ENCODE measurements at regions of chr19 and their contacts with region 1.

Region 1: GRCh38 chr19:47514869-47515588 is at the start of gene NAPA:
- DNase-seq: peak; percentile 100
- H3K4me3 ChIP-seq: peak within 1 kb of the TSS; percentile 98
- H3K4me3 Mint-ChIP-seq: peak within 1 kb of the TSS; percentile 92 to 99 (median 98)
- H3K27ac ChIP-seq: peak within 1 kb of the TSS; percentile 98
- H3K27ac Mint-ChIP-seq: peak within 1 kb of the TSS; percentile 93 to 99 (median 98)
- H3K4me1 ChIP-seq: peaks cover 71% of the 10 kb centered on the region
- H3K4me1 Mint-ChIP-seq: peaks cover 77 to 96% (median 88%) of the 10 kb centered on the region in 3 donors
- H3K27me3 ChIP-seq: no peaks in the 10 kb centered on the region
- H3K27me3 Mint-ChIP-seq: peaks cover 0 to 7% of the 10 kb centered on the region in 2 donors
- total RNA-seq, gene NAPA: 77.6 to 78.0 TPM

Region 2: GRCh38 chr19:47436712-47437401 is 78.2 kb before region 1 on chr19:
- CTCF ChIA-PET with region 1: interaction called, 15 read pairs
- POLR2A ChIA-PET with region 1: no interaction called
- DNase-seq: peak; percentile 68 to 86 (median 78)
- H3K4me3 ChIP-seq: no peak overlapping the region
- H3K4me3 Mint-ChIP-seq: peak overlapping the region in 4 of 7 donors; percentile 0 to 76 (median 25)
- H3K27ac ChIP-seq: no peak overlapping the region
- H3K27ac Mint-ChIP-seq: peak overlapping the region in 1 of 8 donors; percentile 65
- H3K4me1 ChIP-seq: peaks cover 5% of the 10 kb centered on the region
- H3K4me1 Mint-ChIP-seq: peaks cover 15 to 23% (median 20%) of the 10 kb centered on the region in 3 donors
- H3K27me3 ChIP-seq: peaks cover 13% of the 10 kb centered on the region
- H3K27me3 Mint-ChIP-seq: peaks cover 42 to 73% of the 10 kb centered on the region in 2 donors

Region 3: DNA sequence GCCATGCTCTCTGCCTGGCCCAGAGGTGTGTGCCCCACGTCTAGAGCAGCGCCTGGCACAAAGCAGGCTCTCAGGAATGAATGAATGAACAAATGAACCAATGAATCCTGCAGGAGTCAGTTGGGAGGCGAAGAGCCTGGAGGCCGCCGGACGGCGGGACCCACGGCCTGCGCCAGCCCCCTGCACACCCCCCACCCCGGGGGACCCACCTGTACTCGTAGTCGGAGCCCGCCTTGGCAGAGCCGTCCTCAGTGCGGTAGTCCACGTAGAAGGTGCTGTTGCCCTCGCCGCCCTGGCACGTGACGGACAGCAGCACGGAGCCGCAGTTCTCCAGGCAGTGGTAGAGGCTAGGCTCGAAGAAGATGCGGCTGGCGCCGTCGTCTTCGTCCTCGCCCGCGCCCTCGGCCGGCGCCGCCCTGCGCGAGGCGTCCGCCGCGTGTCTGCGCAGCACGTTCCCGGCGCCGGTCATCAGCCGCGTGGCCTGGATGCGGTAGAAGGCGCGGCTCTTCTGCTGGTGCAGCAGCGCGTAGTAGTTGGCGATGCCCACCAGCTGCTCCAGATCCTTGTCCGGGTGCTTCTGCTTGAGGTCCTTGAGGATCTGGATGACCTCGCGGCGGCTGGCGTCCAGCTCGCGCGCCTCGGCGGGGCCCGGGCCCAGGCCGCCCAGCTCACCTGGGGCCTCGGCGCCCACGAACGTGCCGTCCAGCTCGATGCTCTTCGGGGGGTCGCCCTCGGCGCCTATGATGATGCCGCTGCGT is 58.1 kb before region 1 on chr19:
- CTCF ChIA-PET with region 1: no interaction called
- POLR2A ChIA-PET with region 1: no interaction called
- DNase-seq: no peak
- H3K4me3 ChIP-seq: no peak overlapping the region
- H3K4me3 Mint-ChIP-seq: no peak overlapping the region
- H3K27ac ChIP-seq: no peak overlapping the region
- H3K27ac Mint-ChIP-seq: peak overlapping the region in 1 of 8 donors; percentile 22
- H3K4me1 ChIP-seq: no peaks in the 10 kb centered on the region
- H3K4me1 Mint-ChIP-seq: no peaks in the 10 kb centered on the region
- H3K27me3 ChIP-seq: peaks cover 31% of the 10 kb centered on the region
- H3K27me3 Mint-ChIP-seq: peaks cover 24 to 36% of the 10 kb centered on the region in 2 donors

Region 4: DNA sequence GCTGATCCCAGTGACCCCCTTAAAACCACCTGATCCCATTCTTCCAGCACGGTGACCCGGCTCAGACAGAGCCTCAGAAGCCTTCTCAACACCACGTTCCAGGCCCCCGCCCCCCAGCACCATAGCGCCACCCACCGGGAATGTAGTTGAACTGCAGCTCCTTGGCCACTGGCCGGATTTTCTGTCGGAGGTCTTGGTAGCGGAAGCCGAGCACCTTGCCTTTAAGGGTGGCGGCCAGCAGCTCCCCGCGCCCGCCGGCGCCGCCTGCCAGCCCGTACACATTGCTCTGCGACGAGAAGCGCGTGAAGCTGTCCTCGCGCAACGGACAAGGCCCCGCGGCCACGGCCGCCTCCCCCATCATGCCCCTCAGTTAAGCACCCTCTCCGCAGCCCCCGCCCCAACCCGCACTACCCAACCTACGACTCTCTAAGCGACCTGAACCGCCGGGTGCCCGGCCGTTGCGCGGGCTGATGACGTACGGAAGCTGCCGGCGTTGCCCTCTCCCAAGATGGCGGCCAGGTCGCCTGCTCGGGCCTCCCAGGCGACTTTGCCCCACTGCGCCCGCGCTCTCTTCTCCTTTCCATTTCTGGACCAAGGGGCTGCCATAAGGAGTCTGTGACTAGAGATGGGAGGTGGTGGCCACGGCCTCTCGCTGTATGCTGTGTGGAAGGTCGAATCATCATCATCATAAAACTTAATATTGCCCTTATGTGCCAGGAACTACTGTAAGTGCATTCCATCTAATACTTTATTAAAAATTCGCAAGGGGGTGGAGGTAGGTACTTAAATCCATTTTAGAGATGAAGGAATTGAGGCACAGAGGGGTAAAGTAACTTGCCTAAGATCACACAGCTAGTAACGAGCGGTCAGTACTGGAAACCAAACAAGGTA is 31.0 kb before region 1 on chr19 and contains the start of gene KPTN:
- CTCF ChIA-PET with region 1: interaction called, 25 read pairs
- POLR2A ChIA-PET with region 1: interaction called, 5 read pairs
- DNase-seq: peak; percentile 78 to 90 (median 86)
- H3K4me3 ChIP-seq: peak within 1 kb of the TSS; percentile 79
- H3K4me3 Mint-ChIP-seq: peak within 1 kb of the TSS; percentile 92 to 99 (median 98)
- H3K27ac ChIP-seq: peak within 1 kb of the TSS; percentile 90
- H3K27ac Mint-ChIP-seq: peak within 1 kb of the TSS; percentile 96 to 100 (median 98)
- H3K4me1 ChIP-seq: peaks cover 21% of the 10 kb centered on the region
- H3K4me1 Mint-ChIP-seq: peaks cover 25 to 46% (median 40%) of the 10 kb centered on the region in 3 donors
- H3K27me3 ChIP-seq: no peaks in the 10 kb centered on the region
- H3K27me3 Mint-ChIP-seq: peaks cover 0 to 6% of the 10 kb centered on the region in 2 donors
- total RNA-seq, gene KPTN: 10.8 to 12.4 TPM

Region 5: GRCh38 chr19:47503130-47503825 is 11.8 kb before region 1 on chr19:
- CTCF ChIA-PET with region 1: interaction called, 11 read pairs
- POLR2A ChIA-PET with region 1: no interaction called
- DNase-seq: no peak
- H3K4me3 ChIP-seq: no peak overlapping the region
- H3K4me3 Mint-ChIP-seq: no peak overlapping the region
- H3K27ac ChIP-seq: no peak overlapping the region
- H3K27ac Mint-ChIP-seq: peak overlapping the region in 1 of 8 donors; percentile 42
- H3K4me1 ChIP-seq: no peaks in the 10 kb centered on the region
- H3K4me1 Mint-ChIP-seq: peaks cover 8 to 16% (median 15%) of the 10 kb centered on the region in 3 donors
- H3K27me3 ChIP-seq: no peaks in the 10 kb centered on the region
- H3K27me3 Mint-ChIP-seq: peaks cover 0 to 1% of the 10 kb centered on the region in 2 donors

Region 6: DNA sequence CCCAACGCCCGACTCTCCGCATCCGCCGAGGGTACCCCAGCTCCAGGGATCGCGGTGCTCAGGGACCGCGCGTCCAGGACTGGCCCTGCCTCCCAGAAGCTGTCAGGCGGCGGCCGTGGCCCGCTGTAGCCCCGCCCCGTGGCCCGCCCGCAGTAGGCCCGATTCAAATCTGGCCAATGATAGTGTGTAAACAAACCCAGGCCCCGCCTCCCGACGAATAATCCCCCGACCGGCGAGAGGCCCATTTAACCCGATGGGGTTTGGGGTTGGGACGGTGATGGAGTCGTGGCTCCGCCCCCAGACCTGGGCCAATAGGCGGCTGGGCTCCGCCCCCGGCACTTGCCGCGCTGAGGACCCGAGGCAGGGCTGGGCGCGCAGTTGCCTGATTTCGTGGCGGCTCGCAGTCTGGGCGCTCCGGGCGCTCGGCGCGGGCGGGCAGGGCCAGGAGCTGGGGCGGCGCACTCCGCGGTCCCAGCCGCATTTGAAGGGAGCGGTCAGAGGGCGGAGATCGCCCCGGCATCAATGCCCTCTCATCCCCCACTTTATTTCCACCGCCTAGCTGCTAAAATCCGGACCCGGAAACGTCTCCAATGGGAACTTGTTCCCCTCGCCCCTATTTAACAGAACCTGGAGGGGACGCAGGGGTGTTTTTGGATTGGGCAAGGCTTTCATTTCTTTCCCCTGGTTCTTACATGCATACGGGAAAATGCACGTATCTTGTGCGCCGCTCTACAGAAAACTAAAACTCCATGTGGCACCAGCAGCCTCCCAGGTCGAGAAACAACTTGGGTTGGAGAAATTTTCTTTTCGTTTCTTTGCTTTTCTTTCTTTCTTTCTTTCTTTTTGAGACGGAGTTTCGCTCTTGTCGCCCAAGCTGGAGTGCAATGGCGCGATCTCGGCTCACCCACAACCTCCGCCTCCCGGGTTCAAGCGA is 85.5 kb after region 1 on chr19:
- CTCF ChIA-PET with region 1: interaction called, 24 read pairs
- POLR2A ChIA-PET with region 1: interaction called, 6 read pairs
- DNase-seq: peak; percentile 97 to 100 (median 99)
- H3K4me3 ChIP-seq: peak overlapping the region; percentile 90
- H3K4me3 Mint-ChIP-seq: peak overlapping the region; percentile 83 to 92 (median 85)
- H3K27ac ChIP-seq: peak overlapping the region; percentile 60
- H3K27ac Mint-ChIP-seq: peak overlapping the region; percentile 66 to 96 (median 86)
- H3K4me1 ChIP-seq: peaks cover 8% of the 10 kb centered on the region
- H3K4me1 Mint-ChIP-seq: peaks cover 15 to 21% (median 19%) of the 10 kb centered on the region in 3 donors
- H3K27me3 ChIP-seq: no peaks in the 10 kb centered on the region
- H3K27me3 Mint-ChIP-seq: peaks cover 0 to 3% of the 10 kb centered on the region in 2 donors

Region 7: DNA sequence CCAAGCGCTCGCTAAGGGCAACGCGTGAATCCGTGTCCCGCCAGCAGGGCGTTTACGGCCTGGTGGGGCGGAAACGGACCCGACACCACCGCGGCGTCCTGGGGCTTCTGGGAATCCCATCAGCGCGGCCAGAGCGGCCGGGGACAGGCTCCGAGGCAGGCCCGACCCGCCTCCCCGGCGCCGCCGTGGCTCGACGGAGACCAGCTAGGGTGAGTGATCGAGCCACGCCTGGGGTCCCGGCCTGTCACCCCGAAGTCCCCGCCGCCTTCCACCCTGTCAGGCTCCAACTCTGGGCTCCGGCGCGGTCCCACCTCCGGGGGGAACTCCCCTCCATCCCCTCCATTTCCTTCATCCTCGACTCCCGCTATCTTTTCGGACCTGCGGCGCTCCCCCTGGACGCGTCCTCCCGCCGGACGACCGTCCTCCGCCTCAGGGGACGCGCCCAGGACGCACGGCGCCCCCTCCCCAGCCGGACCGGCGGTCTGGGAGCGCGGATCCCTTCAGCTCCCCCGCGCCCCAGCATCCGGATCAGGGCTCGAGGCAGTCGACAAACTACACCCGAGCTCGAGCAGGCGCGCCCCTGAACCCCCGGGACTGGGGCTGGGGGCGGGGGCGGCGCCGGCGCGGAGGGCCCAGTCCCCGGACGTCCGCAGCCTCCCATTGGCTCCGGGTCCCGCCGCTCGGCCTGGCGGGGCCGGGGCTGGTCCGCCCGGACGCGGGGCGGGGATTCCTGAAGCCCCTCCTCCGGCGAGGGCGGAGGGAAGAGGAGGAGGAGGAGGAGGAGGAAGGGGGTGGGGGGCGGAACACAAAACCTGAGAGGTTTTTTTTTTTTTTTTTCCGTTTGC is 93.3 kb after region 1 on chr19:
- CTCF ChIA-PET with region 1: interaction called, 15 read pairs
- POLR2A ChIA-PET with region 1: interaction called, 10 read pairs
- DNase-seq: peak; percentile 94 to 98 (median 96)
- H3K4me3 ChIP-seq: peak overlapping the region; percentile 79
- H3K4me3 Mint-ChIP-seq: peak overlapping the region; percentile 74 to 92 (median 84)
- H3K27ac ChIP-seq: peak overlapping the region; percentile 85
- H3K27ac Mint-ChIP-seq: peak overlapping the region; percentile 72 to 90 (median 78)
- H3K4me1 ChIP-seq: peaks cover 23% of the 10 kb centered on the region
- H3K4me1 Mint-ChIP-seq: peaks cover 25 to 35% (median 27%) of the 10 kb centered on the region in 3 donors
- H3K27me3 ChIP-seq: no peaks in the 10 kb centered on the region
- H3K27me3 Mint-ChIP-seq: no peaks in the 10 kb centered on the region